GM10248 (cell line): ENCODE measurements at regions of chr19 and their contacts with region 1.

Region 1: GRCh38 chr19:12965017-12965811 is 4.2 kb upstream of the DAND5 start:
- DNase-seq: peak; percentile 88
- CTCF ChIP-seq: peak; percentile 99

Region 2: GRCh38 chr19:12766051-12766521 is 199.1 kb before region 1 on chr19:
- CTCF ChIA-PET with region 1: interaction called, 18 read pairs
- POLR2A ChIA-PET with region 1: no interaction called
- DNase-seq: peak; percentile 83
- CTCF ChIP-seq: peak; percentile 97

Region 3: DNA sequence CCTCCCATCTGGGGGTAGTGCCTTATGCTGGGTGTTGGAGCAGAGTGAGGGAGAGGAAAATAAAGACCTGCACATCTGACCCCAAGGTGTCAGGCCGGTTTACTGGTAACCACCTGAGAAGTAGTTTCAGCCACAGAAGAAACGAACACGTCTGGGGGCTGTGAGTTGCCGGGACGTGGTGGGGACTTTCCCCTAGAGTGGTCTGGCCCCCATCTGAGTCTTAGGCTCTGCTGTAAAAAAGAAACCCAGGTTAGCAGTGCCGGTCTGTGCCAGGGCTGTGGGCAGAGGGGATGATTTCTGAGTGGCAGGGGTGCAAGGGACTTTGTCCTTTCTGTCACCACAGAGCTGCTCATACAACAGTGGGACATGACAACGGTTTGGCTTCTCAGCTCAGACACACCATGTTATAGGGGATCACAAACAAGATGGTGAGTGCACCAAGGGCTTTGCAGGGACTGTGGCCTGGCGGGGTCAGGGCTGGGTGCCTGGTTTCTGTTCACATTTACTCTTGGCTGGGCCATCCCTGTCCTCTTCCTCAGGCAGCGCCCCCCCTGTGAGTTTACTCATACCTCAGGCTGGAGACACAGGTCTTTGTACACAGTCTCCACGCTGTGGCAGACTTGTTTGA is 65.2 kb before region 1 on chr19:
- CTCF ChIA-PET with region 1: interaction called, 24 read pairs
- POLR2A ChIA-PET with region 1: no interaction called
- DNase-seq: peak; percentile 82
- CTCF ChIP-seq: no peak

Region 4: DNA sequence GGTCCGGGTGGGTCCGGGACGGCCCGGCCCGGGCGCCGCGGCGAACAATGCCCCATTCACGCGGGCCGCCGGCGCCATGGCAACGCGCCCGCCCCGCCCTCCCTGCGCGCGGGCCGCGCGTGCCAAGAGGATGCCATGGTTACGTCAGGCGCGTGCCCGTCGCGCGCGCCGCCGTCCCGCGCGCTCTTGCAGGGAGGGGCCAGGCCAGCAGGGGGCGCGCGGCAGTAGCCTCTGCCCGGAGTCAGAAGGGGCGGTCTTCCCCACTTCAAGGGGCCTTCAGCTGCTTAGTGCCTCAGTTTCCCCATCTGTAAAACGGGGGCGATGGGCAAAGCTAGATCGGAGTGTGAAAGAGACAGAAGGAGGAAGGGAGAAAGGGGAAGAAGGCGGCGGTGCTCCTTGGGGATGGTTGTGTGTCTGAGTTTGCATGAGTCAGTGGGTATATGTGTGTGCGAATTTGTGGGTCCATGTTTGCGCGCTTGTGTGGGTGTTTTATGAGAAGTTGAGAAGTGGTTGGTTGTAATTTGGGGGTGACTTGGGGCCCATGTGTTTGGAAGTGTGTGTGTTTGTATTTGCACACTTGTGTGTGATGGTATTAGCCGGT is 18.4 kb after region 1 on chr19:
- CTCF ChIA-PET with region 1: interaction called, 121 read pairs
- POLR2A ChIA-PET with region 1: no interaction called
- DNase-seq: peak; percentile 88
- CTCF ChIP-seq: peak; percentile 95

Region 5: DNA sequence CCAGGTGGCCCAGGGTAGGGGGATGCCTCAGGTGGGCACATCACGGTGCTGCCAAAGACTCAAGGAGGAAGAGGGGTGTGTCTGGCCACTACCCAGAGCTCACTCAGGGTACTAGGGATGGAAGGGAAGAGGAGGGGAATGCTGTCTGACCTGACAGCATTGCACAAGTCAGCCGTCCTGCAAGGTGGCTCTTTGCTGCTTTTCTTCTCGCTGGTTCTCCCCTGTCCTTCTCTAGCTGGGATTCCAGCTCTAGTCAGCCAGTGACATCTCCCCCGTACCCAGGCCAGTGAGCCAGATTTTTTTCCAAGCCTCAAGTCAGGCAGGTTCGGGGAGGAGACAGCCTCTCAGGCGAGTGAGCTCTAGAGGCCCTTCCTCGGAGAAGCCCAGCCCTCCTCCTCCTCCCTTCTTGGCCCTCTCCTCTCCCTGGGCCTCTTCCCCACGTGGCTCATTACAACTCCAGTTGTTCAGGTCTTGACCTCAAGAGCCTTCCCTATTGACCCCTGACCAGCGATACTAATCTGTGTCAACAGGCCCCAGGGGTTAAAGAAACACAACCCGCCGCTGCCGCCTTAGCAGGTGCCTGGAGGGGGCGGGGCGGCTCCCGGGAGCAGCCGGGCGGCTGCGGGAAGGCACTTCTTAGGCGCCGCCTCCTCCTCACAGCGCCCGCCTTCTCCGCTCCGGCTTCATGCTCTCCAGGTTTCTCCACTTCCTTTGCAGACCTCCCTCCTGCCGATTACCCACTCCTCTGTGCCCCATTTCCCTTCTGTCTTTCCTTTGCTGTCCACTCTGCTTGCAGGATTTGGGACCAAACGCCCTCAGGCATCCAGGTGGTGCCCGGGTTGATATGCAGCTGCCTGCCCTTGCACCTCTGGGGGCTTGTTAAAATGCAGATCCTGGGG is 86.3 kb after region 1 on chr19:
- CTCF ChIA-PET with region 1: interaction called, 19 read pairs
- POLR2A ChIA-PET with region 1: no interaction called
- DNase-seq: peak; percentile 40
- CTCF ChIP-seq: no peak

Region 6: DNA sequence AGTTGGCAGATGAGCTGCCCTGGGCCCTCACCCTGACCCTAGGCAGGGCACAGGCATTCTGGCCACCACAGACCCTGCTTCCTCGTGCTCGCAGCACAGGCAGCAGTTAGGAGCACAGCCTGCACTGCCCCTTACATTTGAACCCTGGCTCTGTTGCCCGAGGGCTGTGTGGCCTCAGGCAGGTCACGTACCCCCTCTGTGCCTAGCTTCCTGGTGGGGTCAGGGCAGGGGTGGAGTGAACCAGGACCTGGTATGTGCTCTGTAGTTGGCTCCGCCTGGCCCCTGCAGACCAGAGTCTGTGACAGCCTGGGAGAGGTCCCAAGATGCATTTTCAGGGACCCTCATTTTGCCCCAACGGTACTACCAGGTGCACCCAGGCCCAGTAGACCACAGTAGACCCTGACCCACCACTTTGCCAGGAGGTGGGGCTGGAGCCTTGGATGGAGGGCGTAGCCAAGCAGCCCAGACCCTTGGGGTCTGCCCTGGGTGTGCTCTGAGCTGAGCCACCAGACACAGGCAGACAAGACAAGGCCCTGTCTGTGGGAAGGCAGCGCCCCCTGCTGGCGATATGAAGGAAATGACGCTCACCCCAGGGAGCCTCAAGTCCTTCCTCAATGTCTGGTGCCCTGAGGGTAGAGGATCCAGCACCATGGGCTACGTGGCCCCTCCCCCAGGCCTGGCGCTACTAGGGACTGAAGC is 128.3 kb after region 1 on chr19:
- CTCF ChIA-PET with region 1: interaction called, 129 read pairs
- POLR2A ChIA-PET with region 1: no interaction called
- DNase-seq: peak; percentile 92
- CTCF ChIP-seq: peak; percentile 92

Region 7: GRCh38 chr19:13172068-13172896 is 207.1 kb after region 1 on chr19:
- CTCF ChIA-PET with region 1: no interaction called
- POLR2A ChIA-PET with region 1: no interaction called
- DNase-seq: peak; percentile 26
- CTCF ChIP-seq: no peak